Calu3 (cell line): ENCODE measurements at regions of chr6 and their contacts with region 1.

Region 1: DNA sequence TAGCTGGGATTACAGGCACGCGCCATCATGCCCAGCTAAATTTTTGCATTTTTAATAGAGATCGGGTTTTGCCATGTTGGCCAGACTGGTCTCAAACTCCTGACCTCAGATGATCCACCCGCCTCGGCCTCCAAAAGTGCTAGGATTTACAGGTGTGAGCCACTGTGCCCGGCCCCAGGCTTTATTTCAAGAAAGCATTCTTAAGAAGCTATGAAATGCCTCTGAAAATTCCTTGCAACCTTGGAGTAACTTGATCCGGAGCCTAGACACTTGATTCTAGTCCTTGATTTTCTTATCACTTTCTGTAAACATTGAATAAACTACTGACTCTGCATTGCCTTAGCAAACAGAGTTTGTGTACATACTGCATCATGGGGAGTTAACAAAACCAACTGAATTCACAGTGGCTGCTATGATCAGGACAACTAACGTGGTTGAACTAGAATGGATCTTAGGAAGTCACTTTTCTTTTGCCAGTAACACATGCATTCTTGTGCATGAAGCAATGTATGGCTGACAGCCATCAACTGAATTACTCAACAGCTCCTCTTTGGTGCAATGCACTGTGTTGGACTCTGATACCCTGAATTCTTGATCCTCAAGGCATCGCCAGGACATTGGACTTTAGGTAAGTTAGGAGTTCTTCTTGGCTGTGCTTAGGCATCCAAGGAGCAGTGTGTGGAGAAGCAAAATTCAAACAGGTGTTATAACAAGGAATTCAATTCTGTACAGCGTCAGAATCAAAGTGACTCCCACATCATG is 102.8 kb upstream of the TMEM170B start:
- DNase-seq: peak; percentile 37
- H3K4me3 Mint-ChIP-seq: peak overlapping the region; percentile 41
- H3K27ac Mint-ChIP-seq: peak overlapping the region; percentile 77
- H3K4me1 Mint-ChIP-seq: peaks cover 26% of the 10 kb centered on the region
- H3K27me3 Mint-ChIP-seq: no peaks in the 10 kb centered on the region
- CTCF ChIP-seq: no peak

Region 2: GRCh38 chr6:11343963-11344747 is 90.6 kb before region 1 on chr6:
- CTCF ChIA-PET with region 1: no interaction called
- intact Hi-C with region 1: loop called (anchors 1 kb)
- DNase-seq: peak; percentile 64
- H3K4me3 Mint-ChIP-seq: no peak overlapping the region
- H3K27ac Mint-ChIP-seq: peak overlapping the region; percentile 87
- H3K4me1 Mint-ChIP-seq: peaks cover 37% of the 10 kb centered on the region
- H3K27me3 Mint-ChIP-seq: no peaks in the 10 kb centered on the region
- CTCF ChIP-seq: no peak